HEK293 (cell line): ENCODE measurements at regions of chr2 and their contacts with region 1.

Region 1: GRCh38 chr2:189762551-189763298 is at the start of gene OSGEPL1:
- H3K4me3 ChIP-seq: peak within 1 kb of the TSS; percentile 80
- H3K27ac ChIP-seq: peak within 1 kb of the TSS; percentile 81
- H3K4me1 ChIP-seq: no peaks in the 10 kb centered on the region
- CTCF ChIP-seq: peak; percentile 78

Region 2: GRCh38 chr2:189379287-189379630 is 383.5 kb before region 1 on chr2:
- CTCF ChIA-PET with region 1: no interaction called
- POLR2A ChIA-PET with region 1: no interaction called
- H3K4me3 ChIP-seq: no peak overlapping the region
- H3K27ac ChIP-seq: no peak overlapping the region
- H3K4me1 ChIP-seq: 0 out of 2 replicates have a peak, but pooled peaks cover 3% of the 10 kb centered on the region
- CTCF ChIP-seq: no peak

Region 3: GRCh38 chr2:189661148-189661956 is 101.4 kb before region 1 on chr2 and contains the start of gene ASNSD1:
- CTCF ChIA-PET with region 1: interaction called, 7 read pairs
- POLR2A ChIA-PET with region 1: interaction called, 10 read pairs
- H3K4me3 ChIP-seq: peak within 1 kb of the TSS; percentile 89
- H3K27ac ChIP-seq: peak within 1 kb of the TSS; percentile 76; the same call in 1 of the 2 replicates
- H3K4me1 ChIP-seq: peaks cover 20% of the 10 kb centered on the region
- CTCF ChIP-seq: peak; percentile 97

Region 4: GRCh38 chr2:189674374-189675112 is 88.2 kb before region 1 on chr2 and contains the start of gene ANKAR:
- CTCF ChIA-PET with region 1: interaction called, 4 read pairs
- POLR2A ChIA-PET with region 1: interaction called, 10 read pairs
- H3K4me3 ChIP-seq: peak within 1 kb of the TSS; percentile 39
- H3K27ac ChIP-seq: peak within 1 kb of the TSS; percentile 80
- H3K4me1 ChIP-seq: no peaks in the 10 kb centered on the region; the same call in 1 of the 2 replicates
- CTCF ChIP-seq: no peak

Region 5: DNA sequence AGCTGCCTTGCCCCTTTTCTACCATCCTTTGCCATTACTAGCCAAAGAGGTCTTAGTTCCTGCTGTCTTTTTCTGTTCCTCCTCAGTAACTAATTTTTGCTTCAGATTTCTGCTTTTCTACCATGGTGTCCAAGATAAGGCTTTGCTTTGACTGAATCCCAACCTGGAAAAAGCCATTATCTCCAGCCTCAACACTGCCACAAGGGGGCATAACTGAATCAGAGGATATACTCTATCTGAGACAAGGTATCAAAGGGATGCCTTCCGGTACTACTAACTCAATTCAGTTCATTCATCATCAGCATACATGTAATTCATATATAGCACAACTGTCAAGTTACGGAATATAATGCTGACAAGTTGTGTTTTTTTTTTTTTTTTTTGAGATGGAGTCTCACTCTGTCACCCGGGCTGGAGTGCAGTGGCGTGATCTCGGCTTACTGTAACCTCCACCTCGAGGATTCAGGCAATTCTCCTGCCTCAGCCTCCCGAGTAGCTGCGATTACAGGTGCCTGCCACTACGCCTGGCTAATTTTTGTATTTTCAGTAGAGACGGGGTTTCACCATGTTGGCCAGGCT is 11.6 kb before region 1 on chr2:
- CTCF ChIA-PET with region 1: interaction called, 27 read pairs
- POLR2A ChIA-PET with region 1: no interaction called
- H3K4me3 ChIP-seq: no peak overlapping the region
- H3K27ac ChIP-seq: no peak overlapping the region
- H3K4me1 ChIP-seq: no peaks in the 10 kb centered on the region
- CTCF ChIP-seq: peak; percentile 75; the same call in 1 of the 2 replicates

Region 6: DNA sequence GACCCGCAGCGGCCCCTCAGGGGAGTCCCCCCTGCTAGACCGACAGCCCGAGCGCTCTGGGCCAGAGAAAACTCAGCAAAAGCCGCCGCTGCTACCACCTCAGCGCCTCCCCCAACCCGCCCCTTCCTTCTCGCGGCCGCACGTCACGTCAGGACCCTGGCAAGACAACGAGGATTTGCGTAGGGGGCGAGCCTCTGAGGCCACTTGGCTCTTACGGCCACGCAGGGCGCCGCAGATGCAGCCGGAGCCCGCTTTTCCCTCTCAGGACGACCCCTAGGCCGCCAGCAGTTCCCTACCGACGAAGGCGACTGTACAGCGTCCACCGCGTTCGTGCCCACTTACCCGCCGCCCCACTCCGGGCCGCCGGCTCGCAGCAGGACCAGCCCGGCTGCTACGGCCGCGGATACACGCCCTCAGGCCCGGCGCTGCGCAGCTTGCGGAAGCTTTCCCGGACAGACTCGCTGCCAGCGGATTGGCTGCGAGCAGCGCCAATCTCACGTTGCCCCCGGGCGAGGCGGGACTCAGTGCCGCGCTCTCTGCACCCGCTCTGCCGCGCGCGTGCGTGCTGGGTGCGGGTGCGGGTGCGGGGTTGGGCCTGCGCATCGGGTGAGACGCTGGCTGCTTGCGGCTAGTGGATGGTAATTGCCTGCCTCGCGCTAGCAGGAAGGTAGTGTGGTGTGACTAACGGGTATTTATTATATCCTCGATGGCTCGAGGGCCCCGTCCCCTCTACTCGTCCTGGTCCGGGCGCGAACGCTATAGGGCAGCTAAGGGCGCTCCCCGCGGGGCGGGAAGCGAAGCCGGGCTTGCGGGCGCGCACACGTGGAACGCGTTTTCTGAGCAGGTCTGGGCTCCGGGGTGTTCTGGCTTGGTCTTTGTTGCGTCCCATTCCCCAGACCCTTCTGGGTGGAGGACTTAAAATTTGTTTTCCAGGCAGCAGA is 21.5 kb after region 1 on chr2 and contains the starts of genes ORMDL1 and PMS1:
- CTCF ChIA-PET with region 1: no interaction called
- POLR2A ChIA-PET with region 1: interaction called, 24 read pairs
- H3K4me3 ChIP-seq: peak within 1 kb of the TSS; percentile 97
- H3K27ac ChIP-seq: peak within 1 kb of the TSS; percentile 89
- H3K4me1 ChIP-seq: peaks cover 5% of the 10 kb centered on the region; the same call in 1 of the 2 replicates
- CTCF ChIP-seq: peak; percentile 76; the same call in 1 of the 2 replicates